ENCODE measurements at regions of chr5 and their contacts with region 1.

Region 1: DNA sequence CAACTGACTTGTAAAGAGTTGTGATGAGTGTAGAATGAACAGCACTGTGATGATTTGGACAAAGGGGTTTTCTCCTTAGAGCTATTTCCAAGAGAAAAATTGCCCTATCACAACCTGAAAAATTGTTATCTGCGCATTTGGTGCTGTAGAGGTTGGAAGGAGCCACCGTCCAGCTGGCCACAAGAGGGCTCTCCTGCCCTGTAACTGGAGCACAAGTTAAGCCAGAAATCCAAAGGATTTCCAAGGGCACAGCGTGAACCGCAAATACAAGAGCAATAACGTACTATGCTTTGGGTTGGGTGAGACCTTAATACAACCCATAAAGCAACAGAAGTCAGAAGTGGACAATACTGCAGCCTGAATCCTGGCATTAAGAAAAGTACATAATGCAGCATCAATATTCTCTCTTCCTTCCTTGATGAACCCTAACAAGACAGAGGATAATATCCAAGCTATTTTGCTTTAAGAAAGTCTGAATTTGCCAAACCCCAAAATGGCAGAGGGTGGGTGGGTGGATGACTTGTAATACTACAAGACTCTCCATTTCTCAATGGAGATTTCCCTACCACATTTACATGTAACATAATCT is 56.8 kb upstream of the SMIM32 start:
- DNase-seq: peak; percentile 59 to 80
- ATAC-seq: peak; percentile 58
- H3K4me3 ChIP-seq: no peak overlapping the region
- H3K27ac ChIP-seq: no peak overlapping the region
- H3K4me1 ChIP-seq: no peaks in the 10 kb centered on the region
- H3K27me3 ChIP-seq: no peaks in the 10 kb centered on the region

Region 2: GRCh38 chr5:136424835-136425584 is 175.2 kb after region 1 on chr5:
- intact Hi-C with region 1: loop called (anchors 2 to 5 kb)
- DNase-seq: peak; percentile 76 to 89
- ATAC-seq: peak; percentile 69
- H3K4me3 ChIP-seq: no peak overlapping the region
- H3K27ac ChIP-seq: no peak overlapping the region
- H3K4me1 ChIP-seq: no peaks in the 10 kb centered on the region
- H3K27me3 ChIP-seq: peaks cover 0 to 1% of the 10 kb centered on the region in 2 donors

Region 3: GRCh38 chr5:136769900-136770684 is 520.3 kb after region 1 on chr5:
- intact Hi-C with region 1: loop called (anchors 2 to 5 kb)
- DNase-seq: peak; percentile 59 to 84
- ATAC-seq: peak; percentile 68
- H3K4me3 ChIP-seq: no peak overlapping the region
- H3K27ac ChIP-seq: no peak overlapping the region
- H3K4me1 ChIP-seq: no peaks in the 10 kb centered on the region
- H3K27me3 ChIP-seq: no peaks in the 10 kb centered on the region

Measured in aorta (tissue), 5 donors.